Left colon (tissue), 2 donors: ENCODE measurements at regions of chr4 and their contacts with region 1.

Region 1: DNA sequence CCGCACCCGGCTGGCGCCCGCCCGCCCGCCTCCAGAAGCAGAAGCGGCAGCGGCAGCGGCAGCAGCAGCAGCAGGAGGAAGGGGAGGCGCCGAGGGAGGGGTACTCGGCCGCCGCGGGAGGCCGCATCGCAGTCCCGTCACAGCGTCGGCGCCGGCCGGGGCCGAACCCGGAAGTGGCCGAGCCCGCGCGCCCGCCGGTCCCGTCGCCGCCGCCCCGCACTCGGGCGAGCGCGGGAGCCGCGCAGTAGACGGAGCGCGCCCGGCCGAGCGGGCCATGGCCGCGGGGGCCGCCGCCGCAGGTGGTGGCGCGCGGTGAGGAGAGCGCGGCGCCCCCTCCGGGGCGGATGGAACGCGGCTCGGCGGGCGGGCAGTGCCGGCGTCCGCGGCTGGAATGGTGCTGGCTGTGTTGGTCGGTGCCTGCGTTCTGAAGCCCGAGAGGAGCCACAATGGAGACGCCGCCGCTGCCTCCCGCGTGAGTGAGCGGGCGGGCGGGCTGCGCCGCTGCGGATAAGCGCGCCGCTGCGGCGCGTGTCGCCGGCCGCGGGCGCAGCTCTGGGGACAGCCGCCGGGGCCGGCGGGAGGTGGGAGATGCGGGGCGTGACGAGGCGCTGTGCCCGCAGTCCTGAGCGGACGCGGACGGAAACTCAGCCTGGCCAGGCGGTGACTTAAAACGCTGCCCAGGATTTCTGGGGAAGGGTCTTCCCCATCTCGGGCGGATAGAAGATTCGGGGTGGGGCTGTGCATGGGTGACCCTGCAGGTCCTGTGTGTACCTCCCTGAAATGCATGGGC is at the start of gene KLHL2:
- DNase-seq: peak; percentile 77 to 83
- ATAC-seq: peak; percentile 98
- total RNA-seq, gene KLHL2: 8.9 to 12.8 TPM

Region 2: DNA sequence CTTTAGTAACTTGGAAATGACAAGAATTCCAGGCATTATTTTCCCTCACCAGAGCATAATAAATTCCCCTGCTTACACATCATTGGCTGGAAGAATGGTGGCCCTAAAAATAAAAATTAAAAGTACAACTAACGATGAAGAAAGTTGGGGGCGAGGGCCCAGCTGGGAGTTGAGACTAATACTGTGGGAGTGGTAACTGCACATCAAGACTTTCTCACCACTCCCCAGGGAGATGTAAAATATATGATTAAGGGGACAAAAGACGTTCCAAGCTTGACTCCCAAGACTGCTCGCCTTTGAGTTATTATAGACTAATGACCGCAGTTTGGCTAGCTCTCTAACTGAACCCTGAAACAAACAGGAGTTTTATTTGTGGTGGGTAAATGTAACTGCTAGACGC is 423.6 kb before region 1 on chr4:
- intact Hi-C with region 1: no loop called
- DNase-seq: no peak
- ATAC-seq: no peak

Region 3: DNA sequence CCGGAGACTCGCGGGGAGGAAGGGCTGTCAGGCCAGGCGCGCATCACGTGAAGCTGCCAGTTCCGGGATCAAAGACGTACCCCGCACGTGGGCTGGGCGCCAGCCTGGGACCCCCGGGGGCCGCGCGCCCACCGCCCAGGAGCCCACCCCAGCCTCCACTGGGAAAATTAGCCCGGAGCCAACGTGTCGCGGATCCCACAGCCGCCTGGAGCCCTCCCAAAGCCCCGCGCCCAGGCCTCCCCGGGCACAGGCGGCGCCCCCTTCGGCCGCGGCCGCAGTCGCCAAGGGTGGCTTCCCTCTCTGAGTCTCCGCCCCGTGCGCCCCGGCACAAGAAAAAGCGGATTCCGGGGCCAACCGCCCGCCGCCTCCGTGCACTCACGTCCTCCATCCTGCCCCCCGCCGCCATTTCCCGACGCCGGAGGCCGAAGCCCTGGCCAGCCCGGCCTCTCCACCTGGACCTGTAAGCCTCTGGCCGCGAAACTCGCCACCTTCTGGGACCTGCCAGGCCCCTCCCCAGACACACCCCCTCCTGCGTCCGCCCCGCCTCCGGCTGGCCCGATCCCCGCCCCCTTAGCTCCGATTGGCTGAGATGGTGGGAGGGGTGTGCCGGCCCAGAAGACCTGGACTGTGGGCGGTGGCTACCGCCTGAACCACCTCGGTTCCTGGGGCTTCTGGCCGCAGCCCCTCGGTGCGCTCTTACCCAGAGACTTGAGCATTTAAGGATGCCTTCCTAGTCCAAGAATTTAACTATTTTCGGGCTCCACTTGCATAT is 95.1 kb before region 1 on chr4 and contains the start of gene TMEM192:
- intact Hi-C with region 1: loop called in 1 of 2 experiments (anchors 5 kb)
- DNase-seq: peak; percentile 95
- ATAC-seq: peak; percentile 99
- total RNA-seq, gene TMEM192: 19.4 TPM